ENCODE measurements at regions of chr3 and their contacts with region 1.

Region 1: DNA sequence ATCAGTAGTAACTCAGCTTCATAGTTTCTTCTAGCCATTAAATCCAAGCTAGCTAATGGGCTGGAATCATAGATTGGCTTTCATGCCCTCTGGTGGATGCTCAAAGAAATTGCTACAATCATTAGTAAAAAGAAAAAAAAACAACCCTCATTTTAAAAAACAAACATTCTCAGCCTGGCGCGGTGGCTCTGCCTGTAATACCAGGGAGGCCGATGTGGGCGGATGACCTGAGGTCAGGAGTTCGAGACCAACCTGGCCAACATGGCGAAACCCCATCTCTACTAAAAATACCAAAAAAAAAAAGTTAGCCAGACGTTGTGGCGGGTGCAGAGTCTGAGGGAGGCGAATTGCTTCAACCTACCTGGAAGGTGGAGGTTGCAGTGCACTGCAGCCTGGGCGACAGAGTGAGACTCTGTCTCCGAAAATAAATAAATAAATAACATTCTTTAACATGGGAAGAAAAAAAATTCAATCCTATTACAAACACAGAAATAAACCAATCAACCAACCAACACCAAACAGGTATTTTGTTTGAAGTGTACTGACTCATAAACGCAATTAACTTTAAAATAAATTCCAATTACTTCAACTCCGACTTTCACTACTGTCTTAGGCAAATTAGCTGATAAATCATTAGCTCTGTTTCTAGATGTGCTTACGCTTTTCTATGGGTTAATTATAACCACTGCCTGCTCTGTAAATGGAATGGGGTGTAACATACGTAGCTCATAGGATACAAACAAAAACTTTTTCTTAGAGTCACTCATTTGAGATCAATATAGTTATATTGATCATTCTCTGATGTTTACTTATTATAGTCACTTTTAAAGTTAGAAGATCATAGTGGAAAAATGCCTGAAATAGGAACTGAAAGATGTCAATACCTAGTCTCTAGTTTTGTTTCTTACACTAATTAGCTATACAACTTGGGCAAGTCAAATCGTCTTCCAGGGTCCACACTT is 24.9 kb downstream of the TMEM207 start:
- DNase-seq: no peak
- H3K4me3 ChIP-seq: no peak overlapping the region
- H3K27ac ChIP-seq: no peak overlapping the region
- H3K4me1 ChIP-seq: peaks cover 0 to 3% (median 0%) of the 10 kb centered on the region in 4 donors
- H3K27me3 ChIP-seq: no peaks in the 10 kb centered on the region
- CTCF ChIP-seq: peak in 1 of 4 experiments; percentile 52
- EP300 ChIP-seq: no peak
- POLR2A ChIP-seq: no peak

Region 2: GRCh38 chr3:190224863-190225692 is 199.7 kb before region 1 on chr3:
- intact Hi-C with region 1: loop called (anchors 10 kb)
- DNase-seq: no peak
- H3K4me3 ChIP-seq: no peak overlapping the region
- H3K27ac ChIP-seq: no peak overlapping the region
- H3K4me1 ChIP-seq: no peaks in the 10 kb centered on the region
- H3K27me3 ChIP-seq: no peaks in the 10 kb centered on the region
- CTCF ChIP-seq: peak in 2 of 4 experiments; percentile 26 to 29
- EP300 ChIP-seq: no peak
- POLR2A ChIP-seq: no peak

Region 3: GRCh38 chr3:190321789-190322603 is 102.8 kb before region 1 on chr3 and contains the start of gene CLDN1:
- intact Hi-C with region 1: loop called (anchors 5 kb)
- DNase-seq: peak; percentile 88
- H3K4me3 ChIP-seq: peak within 1 kb of the TSS; percentile 25 to 55 (median 50)
- H3K27ac ChIP-seq: no peak within 1 kb of the TSS
- H3K4me1 ChIP-seq: peaks cover 0 to 22% (median 16%) of the 10 kb centered on the region in 4 donors
- H3K27me3 ChIP-seq: peaks cover 0 to 14% (median 9%) of the 10 kb centered on the region in 3 donors
- CTCF ChIP-seq: peak; percentile 59 to 99 (median 82)
- EP300 ChIP-seq: no peak
- POLR2A ChIP-seq: no peak
- total RNA-seq, gene CLDN1: 0.27 to 0.49 (median 0.32) TPM

Measured in sigmoid colon (tissue), 7 donors.